ENCODE measurements at regions of chr15 and their contacts with region 1.

Region 1: GRCh38 chr15:49847937-49848823 is 227.3 kb downstream of the DTWD1 start:
- DNase-seq: no peak
- H3K4me3 ChIP-seq: no peak overlapping the region
- H3K27ac ChIP-seq: peak overlapping the region; percentile 62 to 75
- H3K4me1 ChIP-seq: peaks cover 0 to 31% (median 20%) of the 10 kb centered on the region in 4 donors
- H3K27me3 ChIP-seq: no peaks in the 10 kb centered on the region
- CTCF ChIP-seq: no peak

Region 2: DNA sequence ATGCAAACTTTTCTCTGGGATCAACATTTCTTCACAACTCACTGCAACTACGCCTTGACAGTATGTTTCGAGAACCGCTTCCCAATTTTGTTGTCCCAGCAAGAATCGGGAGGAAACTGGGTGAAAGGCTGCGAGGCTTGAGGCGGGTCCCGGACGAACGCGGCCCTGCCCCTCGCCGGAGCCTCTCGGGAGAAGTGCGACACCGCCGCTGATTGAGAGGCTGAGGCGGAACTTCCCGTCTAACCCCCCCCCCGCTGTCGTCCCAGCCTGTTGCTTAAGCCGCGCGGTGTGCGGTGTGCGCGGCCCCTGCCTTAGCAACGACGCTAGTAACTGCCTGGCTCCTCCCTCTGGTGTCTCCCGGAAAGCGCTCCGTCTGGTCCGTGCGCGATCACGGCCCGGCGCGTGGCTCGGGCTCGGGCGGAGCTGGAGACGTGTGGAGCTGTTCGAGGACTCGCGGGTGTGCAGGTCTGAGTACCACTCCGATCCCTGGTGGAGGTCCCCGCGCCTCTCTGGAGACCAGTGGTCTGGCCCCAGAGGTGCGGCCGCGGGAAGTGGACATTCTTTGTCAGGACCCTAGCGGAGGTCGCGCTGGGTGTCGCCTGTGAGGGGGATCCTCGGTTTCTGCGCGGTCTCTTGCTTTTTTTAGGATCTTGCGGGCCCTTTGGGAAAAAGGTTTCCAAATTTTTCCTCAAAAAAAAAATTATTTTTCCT is 227.4 kb before region 1 on chr15 and contains the starts of genes DTWD1 and FAM227B:
- intact Hi-C with region 1: loop called (anchors 5 kb)
- DNase-seq: peak; percentile 96 to 99
- H3K4me3 ChIP-seq: peak within 1 kb of the TSS; percentile 73 to 89
- H3K27ac ChIP-seq: peak within 1 kb of the TSS; percentile 91 to 93
- H3K4me1 ChIP-seq: peaks cover 0 to 36% (median 18%) of the 10 kb centered on the region in 4 donors
- H3K27me3 ChIP-seq: no peaks in the 10 kb centered on the region
- CTCF ChIP-seq: no peak

Region 3: GRCh38 chr15:49989498-49989897 is 141.3 kb after region 1 on chr15:
- intact Hi-C with region 1: loop called (anchors 10 kb)
- DNase-seq: peak in 1 of 2 donors; percentile 37
- H3K4me3 ChIP-seq: no peak overlapping the region
- H3K27ac ChIP-seq: peak overlapping the region; percentile 34 to 55
- H3K4me1 ChIP-seq: peaks cover 0 to 29% (median 12%) of the 10 kb centered on the region in 4 donors
- H3K27me3 ChIP-seq: no peaks in the 10 kb centered on the region
- CTCF ChIP-seq: no peak

Measured in tibial artery (tissue), 4 donors.